ENCODE measurements at regions of chrX and their contacts with region 1.

Region 1: DNA sequence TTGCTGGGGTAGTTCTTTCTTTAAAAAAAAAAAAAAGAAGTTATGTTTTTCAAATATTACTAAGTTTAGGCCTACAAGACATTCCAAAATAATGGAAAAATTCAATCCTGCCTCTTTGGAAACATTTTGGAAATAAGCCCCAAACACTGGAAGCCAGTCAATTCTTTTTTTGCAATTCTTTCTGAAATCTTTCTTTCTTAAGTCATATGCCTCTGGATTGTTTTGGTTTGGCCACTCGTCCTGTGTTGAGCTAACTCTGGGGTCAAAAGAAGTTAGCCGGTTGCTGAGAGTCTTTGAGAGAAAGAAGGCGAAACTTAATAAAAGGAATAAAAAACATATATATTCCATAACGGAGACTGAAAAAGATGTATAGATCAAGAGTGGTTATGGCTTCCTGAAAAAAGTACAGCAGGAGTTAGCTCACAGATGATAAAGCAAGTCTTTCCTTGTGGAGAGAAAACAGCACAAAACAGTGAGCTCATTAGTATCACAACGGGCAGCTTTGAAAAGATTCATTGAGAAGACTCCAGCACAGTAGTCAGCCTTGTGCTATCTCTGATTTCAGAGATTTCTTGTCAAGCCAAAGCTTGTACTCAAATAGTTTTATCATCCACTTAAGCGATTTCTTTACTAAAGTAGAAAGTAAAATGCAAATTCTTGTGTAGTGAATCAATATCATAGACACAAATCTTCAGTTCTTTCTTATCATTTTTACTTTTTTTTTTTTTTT is 64.8 kb downstream of the PLS3 start:
- DNase-seq: no peak
- ATAC-seq: peak; percentile 51

Region 2: GRCh38 chrX:115413246-115413878 is 212.4 kb before region 1 on chrX:
- intact Hi-C with region 1: no loop called
- DNase-seq: no peak
- ATAC-seq: no peak

Region 3: DNA sequence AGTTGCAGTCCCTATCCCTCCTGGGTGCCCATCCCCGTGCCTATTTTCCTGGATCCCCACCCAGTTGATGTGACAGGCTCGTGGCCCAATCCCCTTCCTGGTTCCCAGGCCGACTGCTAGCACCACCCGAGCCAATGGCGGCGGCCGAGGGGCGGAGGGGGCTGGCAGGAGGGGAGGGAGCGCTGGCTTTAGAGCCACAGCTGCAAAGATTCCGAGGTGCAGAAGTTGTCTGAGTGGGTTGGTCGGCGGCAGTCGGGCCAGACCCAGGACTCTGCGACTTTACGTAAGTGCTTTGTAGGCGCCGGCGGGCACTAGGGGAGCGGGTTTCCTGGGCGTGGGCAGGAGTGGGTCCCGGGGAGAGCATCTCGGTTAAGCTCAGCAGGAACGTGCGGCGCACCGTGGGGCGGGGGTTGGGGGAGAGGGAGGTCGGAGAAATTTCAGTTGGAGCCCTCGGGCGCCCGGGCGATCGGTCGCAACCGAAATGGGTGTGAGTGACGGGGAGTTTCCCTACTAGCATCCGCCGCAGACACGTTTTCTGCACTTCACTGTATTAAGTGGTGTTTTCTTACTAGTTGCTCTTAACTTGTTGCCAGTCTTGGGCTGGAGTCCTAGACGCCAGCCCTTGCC is 64.6 kb before region 1 on chrX and contains the start of gene PLS3:
- intact Hi-C with region 1: loop called (anchors 10 kb)
- DNase-seq: peak; percentile 91
- ATAC-seq: peak; percentile 94
- total RNA-seq, gene PLS3: 35.0 TPM